Mammary epithelial cell (primary cell): ENCODE measurements at regions of chr1 and their contacts with region 1.

Region 1: DNA sequence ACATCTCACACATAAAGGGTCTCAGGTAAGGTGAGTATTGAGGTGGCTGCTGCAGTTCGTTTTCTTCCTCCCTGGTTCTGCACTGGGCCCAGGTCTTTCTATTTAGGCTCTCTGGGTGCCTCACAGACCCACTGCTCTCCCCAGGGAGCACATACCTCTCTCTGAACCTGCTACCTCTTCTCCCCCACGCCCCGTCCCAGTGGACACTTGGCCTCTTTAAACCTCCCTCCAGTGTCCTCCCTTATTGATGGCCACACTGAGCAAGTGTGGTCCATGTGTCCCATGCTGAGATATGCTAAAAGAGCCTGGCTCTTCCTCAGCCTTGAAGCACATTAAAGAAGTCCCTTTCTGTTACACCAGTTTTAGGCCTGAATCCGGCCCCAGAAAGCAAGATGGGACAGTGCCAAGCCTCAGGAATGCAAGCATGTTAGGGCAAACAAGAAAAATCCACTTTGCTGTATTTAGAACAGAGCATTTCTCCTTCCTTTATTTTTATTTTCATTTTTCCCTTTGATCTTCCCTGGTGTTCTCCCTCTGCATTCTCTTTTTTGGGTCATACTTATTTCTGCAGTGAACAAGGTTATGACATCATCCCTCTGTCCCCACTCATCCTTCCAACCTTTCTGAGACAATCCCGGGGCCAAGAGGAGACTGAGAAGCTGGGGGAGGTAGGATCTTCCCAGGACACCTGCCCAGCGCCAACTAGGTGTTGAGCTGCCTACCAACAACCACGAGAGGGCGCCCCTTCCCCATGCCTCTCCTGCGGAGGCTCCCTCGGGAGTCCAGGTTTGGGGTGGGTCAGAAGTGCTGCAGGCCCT is 5.0 kb upstream of the CHI3L2 start:
- DNase-seq: peak; percentile 77
- H3K4me3 ChIP-seq: peak overlapping the region in 1 of 3 experiments; percentile 6
- H3K27ac ChIP-seq: no peak overlapping the region
- H3K4me1 ChIP-seq: peaks cover 26% of the 10 kb centered on the region
- H3K27me3 ChIP-seq: no peaks in the 10 kb centered on the region
- CTCF ChIP-seq: peak; percentile 79 to 99

Region 2: GRCh38 chr1:111015225-111015624 is 207.3 kb before region 1 on chr1:
- CTCF ChIA-PET with region 1: no interaction called
- dilution Hi-C with region 1: no loop called
- in situ Hi-C with region 1: no loop called
- intact Hi-C with region 1: no loop called
- DNase-seq: no peak
- H3K4me3 ChIP-seq: no peak overlapping the region
- H3K27ac ChIP-seq: no peak overlapping the region
- H3K4me1 ChIP-seq: no peaks in the 10 kb centered on the region
- H3K27me3 ChIP-seq: no peaks in the 10 kb centered on the region
- CTCF ChIP-seq: no peak

Region 3: GRCh38 chr1:111030590-111030989 is 191.9 kb before region 1 on chr1:
- CTCF ChIA-PET with region 1: no interaction called
- dilution Hi-C with region 1: no loop called
- in situ Hi-C with region 1: no loop called
- intact Hi-C with region 1: loop called (anchors 1 kb)
- DNase-seq: peak; percentile 49
- H3K4me3 ChIP-seq: no peak overlapping the region
- H3K27ac ChIP-seq: no peak overlapping the region
- H3K4me1 ChIP-seq: no peaks in the 10 kb centered on the region
- H3K27me3 ChIP-seq: no peaks in the 10 kb centered on the region
- CTCF ChIP-seq: peak; percentile 87 to 91

Region 4: DNA sequence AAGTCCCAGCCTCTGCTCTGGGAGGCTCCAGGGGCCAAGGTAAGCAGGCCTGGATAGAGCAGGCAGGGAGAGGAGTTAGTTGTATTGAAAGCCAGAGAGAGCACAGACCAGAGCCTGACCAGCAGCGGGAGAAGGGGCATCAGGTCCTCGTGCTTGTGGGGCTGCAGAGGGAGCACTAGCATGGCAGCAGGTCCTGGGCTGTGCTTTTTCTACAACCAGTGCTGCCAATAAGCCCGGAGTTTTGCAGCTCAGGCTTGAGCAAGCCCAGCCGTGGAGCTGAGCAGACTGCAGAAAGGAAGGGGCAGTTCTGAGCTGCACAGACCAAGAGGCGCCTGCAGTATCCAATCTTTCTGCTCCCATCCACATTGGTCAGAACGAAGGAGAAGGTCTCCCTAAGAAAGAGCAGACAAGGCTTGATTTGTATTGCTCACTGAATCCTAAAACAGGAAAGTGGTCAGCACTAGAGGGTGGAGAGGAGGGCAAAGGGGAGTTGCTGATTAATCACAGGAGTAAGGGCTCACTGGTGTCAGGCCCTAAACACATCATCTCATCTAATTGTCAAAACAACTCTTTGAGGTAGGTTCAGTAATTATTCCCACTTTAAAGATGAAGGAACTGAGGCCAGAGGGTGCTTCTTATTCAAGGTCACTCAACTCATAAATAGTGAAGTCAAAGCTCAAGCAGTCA is 24.8 kb before region 1 on chr1:
- CTCF ChIA-PET with region 1: no interaction called
- dilution Hi-C with region 1: no loop called
- in situ Hi-C with region 1: no loop called
- intact Hi-C with region 1: loop called (anchors 2 kb)
- DNase-seq: no peak
- H3K4me3 ChIP-seq: no peak overlapping the region
- H3K27ac ChIP-seq: no peak overlapping the region
- H3K4me1 ChIP-seq: peaks cover 29% of the 10 kb centered on the region
- H3K27me3 ChIP-seq: no peaks in the 10 kb centered on the region
- CTCF ChIP-seq: peak; percentile 43 to 44

Region 5: DNA sequence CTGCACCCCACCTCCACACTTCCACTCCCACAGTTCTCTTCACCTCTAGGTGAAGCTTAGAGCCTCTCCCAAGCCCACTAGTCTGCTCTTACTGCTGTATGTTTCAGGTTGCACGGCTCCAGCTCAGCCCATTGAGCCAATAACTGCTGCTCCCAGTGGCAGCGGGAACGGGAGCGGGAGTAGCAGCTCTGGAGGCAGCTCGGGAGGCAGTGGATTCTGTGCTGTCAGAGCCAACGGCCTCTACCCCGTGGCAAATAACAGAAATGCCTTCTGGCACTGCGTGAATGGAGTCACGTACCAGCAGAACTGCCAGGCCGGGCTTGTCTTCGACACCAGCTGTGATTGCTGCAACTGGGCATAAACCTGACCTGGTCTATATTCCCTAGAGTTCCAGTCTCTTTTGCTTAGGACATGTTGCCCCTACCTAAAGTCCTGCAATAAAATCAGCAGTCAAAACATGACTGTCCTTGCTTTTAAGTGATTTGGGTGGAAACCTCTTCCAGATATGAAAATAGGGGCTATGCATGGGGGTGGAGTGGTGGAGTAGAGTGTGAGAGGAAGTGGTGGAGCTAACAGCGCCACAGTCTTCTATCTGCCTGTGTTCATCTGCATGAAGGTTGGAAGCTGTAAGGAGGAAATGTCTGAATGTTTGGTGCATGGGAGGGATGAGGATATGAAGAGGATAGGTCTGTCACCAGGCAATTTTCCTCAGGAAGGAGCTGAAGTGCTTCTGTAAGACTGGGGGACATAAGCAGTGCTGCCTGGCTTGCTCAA is 97.8 kb after region 1 on chr1:
- CTCF ChIA-PET with region 1: interaction called, 15 read pairs
- dilution Hi-C with region 1: loop called (anchors 5 kb)
- in situ Hi-C with region 1: no loop called
- intact Hi-C with region 1: no loop called
- DNase-seq: no peak
- H3K4me3 ChIP-seq: no peak overlapping the region
- H3K27ac ChIP-seq: no peak overlapping the region
- H3K4me1 ChIP-seq: peaks cover 5% of the 10 kb centered on the region
- H3K27me3 ChIP-seq: no peaks in the 10 kb centered on the region
- CTCF ChIP-seq: no peak

Region 6: DNA sequence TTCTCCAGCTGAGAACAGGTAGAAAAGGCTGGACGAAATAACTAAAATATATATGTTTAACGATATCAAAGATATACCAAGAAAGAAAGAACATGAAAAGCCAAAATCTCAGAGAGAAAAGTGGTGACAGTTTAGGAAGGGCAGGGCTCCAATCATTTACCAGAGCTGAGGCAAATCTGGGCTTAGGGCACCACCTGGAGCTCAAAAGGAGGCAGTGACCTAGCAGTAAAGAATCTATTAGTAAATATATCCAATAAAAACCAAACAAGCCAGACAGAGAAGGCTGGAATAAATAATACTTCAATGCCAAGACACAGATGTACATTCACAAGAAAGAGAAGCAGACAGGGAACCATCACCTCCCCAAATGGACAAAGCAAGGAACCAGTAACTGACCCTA is 111.7 kb after region 1 on chr1:
- CTCF ChIA-PET with region 1: interaction called, 4 read pairs
- dilution Hi-C with region 1: loop called (anchors 5 kb)
- in situ Hi-C with region 1: loop called (anchors 5 kb)
- intact Hi-C with region 1: loop called (anchors 1 kb)
- DNase-seq: peak; percentile 43
- H3K4me3 ChIP-seq: no peak overlapping the region
- H3K27ac ChIP-seq: no peak overlapping the region
- H3K4me1 ChIP-seq: no peaks in the 10 kb centered on the region
- H3K27me3 ChIP-seq: no peaks in the 10 kb centered on the region
- CTCF ChIP-seq: peak; percentile 80 to 83

Region 7: GRCh38 chr1:111399792-111400610 is 177.5 kb after region 1 on chr1:
- CTCF ChIA-PET with region 1: interaction called, 3 read pairs
- dilution Hi-C with region 1: no loop called
- in situ Hi-C with region 1: loop called (anchors 5 to 10 kb)
- intact Hi-C with region 1: loop called (anchors 1 kb)
- DNase-seq: peak; percentile 23
- H3K4me3 ChIP-seq: no peak overlapping the region
- H3K27ac ChIP-seq: no peak overlapping the region
- H3K4me1 ChIP-seq: no peaks in the 10 kb centered on the region
- H3K27me3 ChIP-seq: no peaks in the 10 kb centered on the region
- CTCF ChIP-seq: peak; percentile 42 to 70

Region 8: DNA sequence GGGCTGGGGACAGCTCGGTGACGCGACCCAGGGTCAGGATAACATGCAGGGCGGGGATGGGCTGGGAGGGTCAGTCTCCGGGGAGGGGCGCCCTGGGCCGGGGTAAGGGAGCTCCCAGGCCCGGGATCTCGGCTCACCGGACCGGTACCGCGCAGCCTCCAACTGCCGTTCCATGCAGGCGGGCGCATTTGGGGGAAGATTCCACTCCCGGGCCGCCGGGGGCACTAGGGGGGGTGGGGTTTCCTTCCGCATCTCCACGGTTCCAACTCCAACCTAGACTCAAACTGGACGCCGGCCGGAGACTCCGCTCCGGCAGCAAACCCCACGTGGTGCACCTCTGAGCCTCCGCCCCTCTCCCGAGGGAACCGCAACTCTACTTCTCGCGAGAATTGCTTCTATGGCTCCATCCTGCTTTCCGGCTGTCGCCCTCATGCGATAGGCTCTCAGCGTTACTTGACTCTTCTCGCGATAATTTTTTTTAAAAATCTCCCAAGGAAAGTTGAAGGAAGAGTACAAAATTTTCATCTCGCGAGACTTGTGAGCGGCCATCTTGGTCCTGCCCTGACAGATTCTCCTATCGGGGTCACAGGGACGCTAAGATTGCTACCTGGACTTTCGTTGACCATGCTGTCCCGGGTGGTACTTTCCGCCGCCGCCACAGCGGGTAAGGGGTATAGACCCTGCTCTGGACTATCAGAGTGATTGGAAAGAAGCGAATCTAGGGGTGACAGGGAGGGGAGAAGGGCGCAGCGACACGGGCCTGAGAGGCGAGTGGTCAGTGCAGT is 226.6 kb after region 1 on chr1 and contains the starts of genes ATP5PB and WDR77:
- CTCF ChIA-PET with region 1: no interaction called
- dilution Hi-C with region 1: no loop called
- in situ Hi-C with region 1: no loop called
- intact Hi-C with region 1: loop called (anchors 5 kb)
- DNase-seq: peak; percentile 98
- H3K4me3 ChIP-seq: peak within 1 kb of the TSS; percentile 88 to 93 (median 89)
- H3K27ac ChIP-seq: peak within 1 kb of the TSS; percentile 85
- H3K4me1 ChIP-seq: peaks cover 30% of the 10 kb centered on the region
- H3K27me3 ChIP-seq: no peaks in the 10 kb centered on the region
- CTCF ChIP-seq: no peak
- total RNA-seq, gene ATP5PB: 184 to 228 TPM
- total RNA-seq, gene WDR77: 51.8 to 71.0 TPM